ENCODE measurements at regions of chr21 and their contacts with region 1.

Region 1: GRCh38 chr21:37916310-37917051 is at the start of gene KCNJ6:
- DNase-seq: peak; percentile 59
- ATAC-seq: peak; percentile 44
- H3K4me3 Mint-ChIP-seq: no peak within 1 kb of the TSS
- H3K27ac Mint-ChIP-seq: no peak within 1 kb of the TSS
- H3K4me1 Mint-ChIP-seq: peaks cover 2% of the 10 kb centered on the region
- H3K27me3 Mint-ChIP-seq: peaks cover 59% of the 10 kb centered on the region
- total RNA-seq, gene KCNJ6: not detected

Region 2: DNA sequence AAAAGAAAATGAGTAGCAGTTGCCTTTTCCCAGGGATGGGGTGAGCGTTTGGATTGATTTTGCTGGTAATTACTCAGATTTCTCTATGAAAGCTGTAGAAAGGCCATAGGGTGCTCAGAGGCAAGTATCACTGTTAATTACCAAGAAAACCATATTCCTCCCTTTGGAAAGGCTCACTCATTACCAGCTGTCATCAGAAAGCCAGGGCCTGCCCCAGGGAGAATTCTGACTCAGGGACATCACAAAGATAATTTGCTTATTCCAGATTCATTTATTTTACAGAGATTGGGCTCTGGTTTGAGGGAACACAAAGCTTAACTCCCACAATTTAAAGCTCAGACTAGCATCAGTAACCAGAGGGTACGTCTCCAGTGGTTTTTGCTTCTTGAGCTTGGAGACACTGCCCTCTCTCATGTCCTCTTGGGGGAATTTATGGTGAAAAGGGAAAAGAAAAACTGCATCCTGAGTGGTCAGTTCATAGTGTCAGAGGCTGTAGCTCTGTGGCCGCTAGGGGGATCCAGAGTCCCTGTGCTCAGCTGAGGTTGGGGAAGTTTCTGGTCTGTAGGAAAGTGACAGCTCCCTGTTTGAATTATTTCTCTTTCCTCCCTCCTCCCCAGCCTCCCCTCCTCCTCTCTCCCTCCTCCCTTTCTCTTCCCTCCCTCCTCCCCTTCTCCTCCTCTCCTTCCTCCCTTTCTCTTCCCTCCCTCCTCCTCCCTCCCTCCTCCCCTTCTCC is 204.5 kb before region 1 on chr21:
- CTCF ChIA-PET with region 1: no interaction called
- POLR2A ChIA-PET with region 1: no interaction called
- intact Hi-C with region 1: loop called (anchors 1 to 10 kb)
- DNase-seq: peak; percentile 78
- ATAC-seq: peak; percentile 53
- H3K4me3 Mint-ChIP-seq: no peak overlapping the region
- H3K27ac Mint-ChIP-seq: no peak overlapping the region
- H3K4me1 Mint-ChIP-seq: no peaks in the 10 kb centered on the region
- H3K27me3 Mint-ChIP-seq: peaks cover 14% of the 10 kb centered on the region

Region 3: GRCh38 chr21:37758982-37759381 is 157.5 kb before region 1 on chr21:
- CTCF ChIA-PET with region 1: no interaction called
- POLR2A ChIA-PET with region 1: no interaction called
- intact Hi-C with region 1: loop called (anchors 2 to 10 kb)
- DNase-seq: peak; percentile 52
- ATAC-seq: no peak
- H3K4me3 Mint-ChIP-seq: no peak overlapping the region
- H3K27ac Mint-ChIP-seq: no peak overlapping the region
- H3K4me1 Mint-ChIP-seq: no peaks in the 10 kb centered on the region
- H3K27me3 Mint-ChIP-seq: peaks cover 7% of the 10 kb centered on the region

Region 4: GRCh38 chr21:37767992-37768391 is 148.5 kb before region 1 on chr21:
- CTCF ChIA-PET with region 1: no interaction called
- POLR2A ChIA-PET with region 1: no interaction called
- intact Hi-C with region 1: loop called in 1 of 2 experiments (anchors 10 kb)
- DNase-seq: no peak
- ATAC-seq: no peak
- H3K4me3 Mint-ChIP-seq: no peak overlapping the region
- H3K27ac Mint-ChIP-seq: no peak overlapping the region
- H3K4me1 Mint-ChIP-seq: no peaks in the 10 kb centered on the region
- H3K27me3 Mint-ChIP-seq: peaks cover 3% of the 10 kb centered on the region